ENCODE measurements at regions of chr2 and their contacts with region 1.

Region 1: GRCh38 chr2:5691975-5692529 is at the start of gene SOX11:
- DNase-seq: peak; percentile 96
- H3K4me3 ChIP-seq: peak within 1 kb of the TSS; percentile 86
- H3K27ac ChIP-seq: peak within 1 kb of the TSS; percentile 91
- H3K4me1 ChIP-seq: no peaks in the 10 kb centered on the region
- H3K27me3 ChIP-seq: no peaks in the 10 kb centered on the region
- CTCF ChIP-seq: no peak
- total RNA-seq, gene SOX11: 73.9 and 75.1 TPM in 2 replicates

Region 2: GRCh38 chr2:3738454-3738853 is 1953.6 kb before region 1 on chr2:
- CTCF ChIA-PET with region 1: no interaction called
- POLR2A ChIA-PET with region 1: no interaction called
- intact Hi-C with region 1: loop called (anchors 10 kb)
- DNase-seq: peak; percentile 85
- H3K4me3 ChIP-seq: no peak overlapping the region
- H3K27ac ChIP-seq: no peak overlapping the region
- H3K4me1 ChIP-seq: peaks cover 18% of the 10 kb centered on the region
- H3K27me3 ChIP-seq: no peaks in the 10 kb centered on the region
- CTCF ChIP-seq: peak; percentile 70

Region 3: DNA sequence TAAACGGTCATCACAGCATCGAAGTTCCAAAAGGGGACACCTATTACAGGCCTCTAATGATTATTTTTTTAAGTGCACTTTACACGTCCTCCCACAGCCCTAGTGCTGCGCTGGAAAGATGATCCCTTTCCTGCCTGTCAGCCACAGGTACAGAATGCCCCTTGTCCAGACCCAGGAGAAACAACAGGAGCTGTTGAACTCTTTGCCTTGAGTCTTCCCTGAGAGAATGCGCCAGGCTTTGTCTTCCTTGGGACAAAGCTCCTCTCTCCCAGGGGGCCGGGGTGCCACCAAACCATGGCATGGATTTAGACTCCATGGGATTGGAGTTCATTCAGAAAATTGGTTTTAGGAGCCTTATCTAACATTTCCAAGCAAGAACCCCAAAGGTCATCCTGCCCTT is 318.9 kb before region 1 on chr2:
- CTCF ChIA-PET with region 1: interaction called, 4 read pairs
- POLR2A ChIA-PET with region 1: no interaction called
- intact Hi-C with region 1: loop called (anchors 2 kb)
- DNase-seq: peak; percentile 80
- H3K4me3 ChIP-seq: peak overlapping the region; percentile 36
- H3K27ac ChIP-seq: peak overlapping the region; percentile 70
- H3K4me1 ChIP-seq: peaks cover 13% of the 10 kb centered on the region
- H3K27me3 ChIP-seq: no peaks in the 10 kb centered on the region
- CTCF ChIP-seq: no peak

Region 4: GRCh38 chr2:5915881-5916310 is 223.8 kb after region 1 on chr2:
- CTCF ChIA-PET with region 1: no interaction called
- POLR2A ChIA-PET with region 1: interaction called, 17 read pairs
- intact Hi-C with region 1: loop called (anchors 1 kb)
- DNase-seq: peak; percentile 79
- H3K4me3 ChIP-seq: no peak overlapping the region
- H3K27ac ChIP-seq: no peak overlapping the region
- H3K4me1 ChIP-seq: peaks cover 19% of the 10 kb centered on the region
- H3K27me3 ChIP-seq: no peaks in the 10 kb centered on the region
- CTCF ChIP-seq: peak; percentile 67

Region 5: GRCh38 chr2:6773007-6773693 is 1081.1 kb after region 1 on chr2:
- CTCF ChIA-PET with region 1: no interaction called
- POLR2A ChIA-PET with region 1: no interaction called
- intact Hi-C with region 1: loop called (anchors 10 kb)
- DNase-seq: peak; percentile 61
- H3K4me3 ChIP-seq: no peak overlapping the region
- H3K27ac ChIP-seq: no peak overlapping the region
- H3K4me1 ChIP-seq: peaks cover 11% of the 10 kb centered on the region
- H3K27me3 ChIP-seq: no peaks in the 10 kb centered on the region
- CTCF ChIP-seq: peak; percentile 97

Measured in A673 (cell line).